Cardiac septum (tissue), 1 donor: ENCODE measurements at regions of chr10 and their contacts with region 1.

Region 1: DNA sequence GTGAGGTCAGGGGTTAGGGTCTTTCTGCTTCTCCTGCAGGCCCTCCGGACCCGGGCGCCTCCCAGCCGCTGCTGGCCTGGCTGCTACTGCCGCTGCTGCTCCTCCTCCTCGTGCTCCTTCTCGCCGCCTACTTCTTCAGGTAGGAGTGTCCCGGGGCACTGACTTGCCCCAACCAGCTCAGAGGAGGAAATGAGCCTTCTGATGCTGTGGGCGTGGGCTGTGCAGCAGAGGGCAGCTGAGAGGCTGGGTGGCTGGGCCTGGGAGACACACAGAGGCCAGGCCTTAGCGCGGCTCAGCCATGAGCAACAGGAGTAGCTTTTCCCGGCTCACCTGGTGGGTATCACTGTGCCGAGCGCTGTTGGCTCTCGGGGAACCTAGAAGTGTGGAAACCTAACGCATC is 78.9 kb downstream of the MKI67 start:
- DNase-seq: peak; percentile 96

Region 2: GRCh38 chr10:127649642-127650041 is 397.7 kb before region 1 on chr10:
- intact Hi-C with region 1: no loop called
- DNase-seq: no peak

Region 3: DNA sequence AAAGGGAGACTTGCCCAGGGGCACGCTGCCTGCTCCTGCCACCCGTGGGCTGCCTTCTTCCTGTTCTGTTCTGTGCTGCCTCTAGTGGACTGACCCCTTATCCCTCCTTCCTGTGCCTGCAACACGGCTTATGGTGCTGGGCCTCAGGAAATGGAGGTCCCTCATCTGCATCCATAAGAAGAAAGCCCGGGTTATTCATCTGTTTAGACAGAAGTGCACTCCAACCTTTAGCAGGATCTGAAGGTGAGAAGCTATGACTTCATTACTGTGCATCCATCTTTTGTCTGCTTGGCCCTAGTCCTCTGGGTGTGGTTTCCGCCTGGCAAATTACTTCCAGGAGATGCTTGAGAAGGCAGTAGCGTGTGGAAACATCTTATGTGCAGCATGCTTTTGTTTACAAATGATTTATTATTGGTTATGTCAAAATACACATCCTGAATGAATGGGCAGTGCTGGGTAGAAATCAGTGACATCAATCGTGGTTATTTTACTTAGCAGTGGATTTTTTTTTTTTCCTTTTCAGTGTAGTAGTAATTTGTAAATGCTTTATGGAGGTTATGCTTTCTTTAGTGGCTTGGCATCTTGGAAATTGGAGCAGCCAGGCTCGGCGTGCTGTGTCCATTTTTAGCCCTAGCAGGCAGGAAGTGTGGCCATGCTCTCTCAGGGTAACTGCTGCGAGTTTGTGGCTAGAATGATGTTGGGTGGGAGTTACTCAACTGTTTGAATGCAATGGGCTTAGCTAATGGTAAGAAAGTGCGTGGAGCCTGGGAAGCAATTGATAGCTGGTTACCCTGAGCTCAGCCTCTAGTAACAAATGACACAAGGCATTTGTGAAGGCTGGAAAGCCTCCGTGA is 127.7 kb before region 1 on chr10:
- intact Hi-C with region 1: loop called (anchors 5 kb)
- DNase-seq: peak; percentile 78

Region 4: DNA sequence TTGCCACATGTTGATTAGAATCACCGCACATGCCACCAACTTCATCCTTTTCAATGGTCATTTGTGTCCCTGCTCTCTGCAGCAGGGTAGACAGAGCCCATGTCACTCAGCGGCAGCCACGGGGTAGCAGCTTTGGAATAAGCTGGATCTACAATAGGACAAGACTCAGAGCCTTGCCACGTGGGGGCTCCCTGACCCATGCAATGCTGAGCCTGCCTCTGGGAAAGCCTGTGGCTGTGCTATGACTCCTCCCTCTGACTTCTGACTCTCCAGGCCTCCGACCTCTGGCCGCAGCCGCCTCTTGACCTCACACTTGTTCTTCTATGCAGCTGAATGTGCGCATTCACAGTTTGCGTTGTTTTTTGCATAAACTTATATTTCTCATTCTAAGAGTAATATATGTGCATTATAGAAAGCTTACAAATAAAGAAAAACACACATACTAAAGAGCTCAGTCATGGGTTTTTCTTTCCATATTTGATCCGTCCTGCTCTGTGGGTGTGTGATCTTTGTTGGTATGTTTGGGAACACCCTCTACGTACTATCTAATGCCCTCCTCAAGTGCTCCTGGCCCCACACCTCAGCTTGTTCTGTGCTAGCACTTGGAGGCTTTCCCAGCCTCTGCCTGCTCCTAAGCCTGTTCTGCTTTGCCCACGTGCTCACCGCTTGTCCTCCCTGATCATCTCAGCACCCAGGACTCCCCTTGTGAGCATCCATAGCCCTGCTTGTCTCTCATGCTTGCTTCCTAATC is 276.9 kb after region 1 on chr10:
- intact Hi-C with region 1: no loop called
- DNase-seq: no peak